ENCODE measurements at regions of chr18 and their contacts with region 1.

Region 1: GRCh38 chr18:5097116-5097703 is 99.8 kb downstream of the AKAIN1 start:
- DNase-seq: peak; percentile 4
- H3K4me3 ChIP-seq: no peak overlapping the region
- H3K27ac ChIP-seq: no peak overlapping the region
- H3K4me1 ChIP-seq: no peaks in the 10 kb centered on the region
- H3K27me3 ChIP-seq: no peaks in the 10 kb centered on the region

Region 2: DNA sequence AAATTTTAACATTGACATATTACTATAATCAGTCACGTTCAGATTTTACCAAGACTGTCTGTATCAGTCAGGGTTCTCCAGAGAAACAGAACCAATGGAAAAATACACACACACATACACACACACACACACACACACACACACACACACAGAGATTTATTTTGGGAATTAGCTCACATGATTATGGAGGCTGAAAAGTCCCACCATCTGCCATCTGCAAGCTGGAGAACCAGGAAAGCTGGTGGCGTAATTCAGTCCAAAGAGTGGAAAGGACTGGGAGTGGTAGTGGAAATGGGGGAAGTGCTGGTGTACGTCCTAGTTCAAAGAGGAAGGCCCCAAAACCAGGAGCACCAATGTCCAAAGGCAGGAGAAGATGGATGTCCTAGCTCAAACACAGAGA is 66.6 kb before region 1 on chr18:
- in situ Hi-C with region 1: loop called (anchors 10 kb)
- DNase-seq: no peak
- H3K4me3 ChIP-seq: no peak overlapping the region
- H3K27ac ChIP-seq: no peak overlapping the region
- H3K4me1 ChIP-seq: no peaks in the 10 kb centered on the region
- H3K27me3 ChIP-seq: no peaks in the 10 kb centered on the region

Measured in GM23248 (cell line).